Posterior cingulate gyrus (tissue), 11 donors: ENCODE measurements at regions of chr1 and their contacts with region 1.

Region 1: GRCh38 chr1:110780600-110781484 is 92.1 kb upstream of the CD53 start:
- DNase-seq: peak; percentile 30 to 94 (median 66)

Region 2: DNA sequence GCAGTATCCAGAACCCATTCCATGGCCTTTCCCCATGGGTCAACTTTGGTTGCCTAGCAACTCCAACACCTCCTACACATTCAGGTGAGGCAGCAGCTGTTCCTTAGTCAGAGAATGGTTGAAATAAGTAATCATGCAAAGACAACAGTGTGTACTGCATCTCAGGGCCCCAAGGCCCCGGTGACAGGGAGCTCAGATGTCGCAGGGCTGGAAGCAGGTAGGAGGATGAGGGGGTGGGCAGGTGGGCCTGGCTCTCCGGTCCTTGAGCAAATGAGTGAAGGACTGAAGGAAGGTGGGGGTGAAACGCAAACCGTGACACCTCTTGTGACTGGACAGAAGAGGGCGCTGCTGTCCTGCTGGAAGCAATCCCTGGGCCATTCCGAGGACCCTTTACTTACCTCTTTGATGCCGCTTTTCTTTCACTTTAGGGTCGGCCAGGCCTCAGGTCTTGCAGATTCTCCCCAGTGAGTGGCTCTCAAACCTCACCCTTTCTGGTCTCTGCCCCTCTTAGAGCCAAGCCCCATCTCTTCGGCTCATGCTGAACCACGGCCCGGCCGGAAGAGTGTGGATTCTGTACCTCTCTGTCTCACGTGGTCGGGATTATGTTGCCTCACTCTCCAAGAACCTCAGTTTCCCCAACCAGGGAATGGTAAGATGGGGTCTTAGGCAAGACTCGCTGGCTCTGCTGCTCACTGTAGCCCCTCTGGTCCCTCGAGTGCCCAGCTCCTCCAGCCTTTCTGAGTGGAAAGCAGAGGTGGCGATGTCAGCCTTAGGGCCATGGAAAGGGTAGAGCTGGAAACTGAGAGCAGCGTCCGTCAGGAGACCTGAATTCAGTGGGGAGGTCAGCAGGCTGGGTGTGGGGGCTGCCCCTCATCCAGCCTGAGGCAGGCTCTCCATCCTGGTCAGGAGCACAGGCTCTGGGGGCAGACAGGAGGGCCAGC is 256.3 kb before region 1 on chr1:
- intact Hi-C with region 1: loop called (anchors 5 kb)
- DNase-seq: peak; percentile 39 to 95 (median 70)

Region 3: GRCh38 chr1:110630839-110631663 is 149.8 kb before region 1 on chr1:
- intact Hi-C with region 1: loop called (anchors 5 kb)
- DNase-seq: peak; percentile 41 to 96 (median 78)